ENCODE measurements at regions of chr7 and their contacts with region 1.

Region 1: GRCh38 chr7:150567169-150567568 is at the start of gene GIMAP4:
- DNase-seq: peak; percentile 51
- ATAC-seq: peak; percentile 64
- H3K4me3 Mint-ChIP-seq: peak within 1 kb of the TSS; percentile 84
- H3K27ac Mint-ChIP-seq: peak within 1 kb of the TSS; percentile 99
- H3K4me1 Mint-ChIP-seq: peaks cover 67% of the 10 kb centered on the region
- H3K27me3 Mint-ChIP-seq: no peaks in the 10 kb centered on the region
- CTCF ChIP-seq: no peak
- total RNA-seq, gene GIMAP4: 88.3 to 97.8 TPM

Region 2: DNA sequence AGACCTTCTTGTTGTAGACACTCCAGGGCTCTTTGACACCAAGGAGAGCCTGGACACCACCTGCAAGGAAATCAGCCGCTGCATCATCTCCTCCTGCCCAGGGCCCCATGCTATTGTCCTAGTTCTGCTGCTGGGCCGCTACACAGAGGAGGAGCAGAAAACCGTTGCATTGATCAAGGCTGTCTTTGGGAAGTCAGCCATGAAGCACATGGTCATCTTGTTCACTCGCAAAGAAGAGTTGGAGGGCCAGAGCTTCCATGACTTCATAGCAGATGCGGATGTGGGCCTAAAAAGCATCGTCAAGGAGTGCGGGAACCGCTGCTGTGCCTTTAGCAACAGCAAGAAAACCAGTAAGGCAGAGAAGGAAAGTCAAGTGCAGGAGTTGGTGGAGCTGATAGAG is 47.0 kb before region 1 on chr7:
- CTCF ChIA-PET with region 1: interaction called, 6 read pairs
- POLR2A ChIA-PET with region 1: interaction called, 13 read pairs
- intact Hi-C with region 1: loop called (anchors 5 kb)
- DNase-seq: peak; percentile 66
- ATAC-seq: peak; percentile 42
- H3K4me3 Mint-ChIP-seq: peak overlapping the region; percentile 98
- H3K27ac Mint-ChIP-seq: peak overlapping the region; percentile 97
- H3K4me1 Mint-ChIP-seq: peaks cover 37% of the 10 kb centered on the region
- H3K27me3 Mint-ChIP-seq: no peaks in the 10 kb centered on the region
- CTCF ChIP-seq: no peak

Region 3: DNA sequence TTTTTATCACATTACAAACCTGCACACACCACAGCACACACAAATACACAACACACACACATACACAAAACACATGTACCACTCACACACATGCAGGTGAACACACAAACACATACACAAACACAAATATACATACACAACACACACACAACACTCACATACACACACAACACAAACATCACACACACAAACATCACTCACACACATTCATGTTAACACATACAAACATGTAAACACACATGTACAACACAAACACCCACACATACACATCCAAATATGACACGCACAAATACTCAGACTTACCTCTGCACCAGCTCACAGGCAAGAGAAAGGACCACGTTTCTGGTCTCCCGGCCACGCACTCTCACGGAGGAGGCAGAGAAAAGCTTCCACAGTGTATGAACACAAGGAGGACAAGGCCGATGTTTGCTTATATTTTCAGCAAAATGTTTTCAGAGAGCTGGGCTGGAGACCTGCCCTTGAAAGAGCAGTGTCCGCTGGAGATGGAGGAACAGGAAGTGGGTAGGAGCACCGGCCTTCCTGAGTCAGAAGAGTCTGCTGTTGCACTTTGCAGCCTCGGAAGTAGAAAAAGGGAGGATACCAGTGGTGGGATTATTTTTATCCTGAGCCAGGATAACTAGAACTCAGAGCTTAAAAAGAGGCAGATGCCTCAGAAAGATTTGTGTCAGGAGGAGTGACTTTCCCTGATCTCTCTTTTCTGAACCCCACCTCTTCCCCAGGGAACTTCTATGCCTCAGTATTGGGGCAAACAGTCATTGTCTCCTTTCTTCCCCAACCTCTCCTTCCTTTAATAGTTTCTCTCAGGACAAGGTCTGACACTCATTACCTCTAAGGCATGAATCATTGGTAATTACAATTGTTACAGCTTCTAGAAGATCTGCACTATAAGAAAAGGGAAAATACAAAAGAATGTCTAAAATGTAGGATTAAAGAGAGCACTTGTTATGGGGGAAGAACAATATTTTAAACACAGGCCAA is 65.0 kb after region 1 on chr7 and contains the start of gene GIMAP6:
- CTCF ChIA-PET with region 1: interaction called, 3 read pairs
- POLR2A ChIA-PET with region 1: interaction called, 13 read pairs
- intact Hi-C with region 1: no loop called
- DNase-seq: peak; percentile 61
- ATAC-seq: peak; percentile 71
- H3K4me3 Mint-ChIP-seq: peak within 1 kb of the TSS; percentile 99
- H3K27ac Mint-ChIP-seq: peak within 1 kb of the TSS; percentile 99
- H3K4me1 Mint-ChIP-seq: peaks cover 69% of the 10 kb centered on the region
- H3K27me3 Mint-ChIP-seq: no peaks in the 10 kb centered on the region
- CTCF ChIP-seq: no peak
- total RNA-seq, gene GIMAP6: 21.2 to 21.5 TPM

Region 4: DNA sequence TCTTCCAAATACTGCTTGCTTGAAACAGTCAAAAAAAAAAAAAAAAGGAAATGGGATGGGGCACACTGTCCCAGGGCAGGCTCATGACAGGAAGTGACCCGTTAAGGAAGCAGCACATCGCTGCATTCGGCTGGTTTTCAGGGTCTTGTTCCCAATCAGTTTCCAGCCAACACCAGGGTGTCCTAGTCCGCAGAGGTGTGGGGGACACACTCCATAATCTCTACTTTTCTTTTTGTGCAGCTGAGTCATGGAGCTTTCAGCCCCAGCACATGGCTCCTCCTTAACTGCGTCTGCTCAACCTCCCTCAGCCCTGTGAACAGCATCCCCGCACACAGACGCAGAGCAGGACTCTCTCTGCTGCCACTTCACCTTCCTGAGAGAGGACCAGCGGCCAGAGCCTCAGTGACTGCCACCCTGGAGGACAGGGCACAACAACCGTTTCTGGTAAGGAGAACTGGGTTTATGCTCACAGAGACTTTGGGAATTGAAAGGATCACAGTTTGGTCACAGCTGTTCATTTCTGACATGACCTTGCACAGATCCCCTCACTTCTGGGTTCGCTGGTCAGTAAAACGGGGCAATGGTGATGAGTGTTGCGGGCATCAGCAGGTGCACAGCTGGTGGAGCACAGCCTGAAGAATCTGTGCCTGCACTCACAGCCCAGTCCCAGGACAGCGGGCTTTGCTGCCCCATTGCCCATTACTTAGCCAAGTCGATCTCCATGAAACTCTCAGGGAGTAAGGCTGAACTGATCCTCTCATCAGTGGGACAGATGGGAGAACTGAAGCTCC is 170.3 kb after region 1 on chr7 and contains the start of gene GIMAP5:
- CTCF ChIA-PET with region 1: interaction called, 5 read pairs
- POLR2A ChIA-PET with region 1: interaction called, 15 read pairs
- intact Hi-C with region 1: loop called (anchors 5 kb)
- DNase-seq: peak; percentile 70
- ATAC-seq: peak; percentile 60
- H3K4me3 Mint-ChIP-seq: peak within 1 kb of the TSS; percentile 89
- H3K27ac Mint-ChIP-seq: peak within 1 kb of the TSS; percentile 97
- H3K4me1 Mint-ChIP-seq: peaks cover 72% of the 10 kb centered on the region
- H3K27me3 Mint-ChIP-seq: no peaks in the 10 kb centered on the region
- CTCF ChIP-seq: no peak
- total RNA-seq, gene GIMAP5: 37.6 to 40.7 TPM